ENCODE measurements at regions of chr6 and their contacts with region 1.

Region 1: GRCh38 chr6:19791267-19791666 is 45.9 kb upstream of the ID4 start:
- DNase-seq: no peak
- H3K4me3 ChIP-seq: no peak overlapping the region
- H3K27ac ChIP-seq: peak overlapping the region; percentile 64
- H3K4me1 ChIP-seq: peaks cover 0 to 28% of the 10 kb centered on the region in 2 donors
- H3K27me3 ChIP-seq: no peaks in the 10 kb centered on the region
- CTCF ChIP-seq: no peak

Region 2: DNA sequence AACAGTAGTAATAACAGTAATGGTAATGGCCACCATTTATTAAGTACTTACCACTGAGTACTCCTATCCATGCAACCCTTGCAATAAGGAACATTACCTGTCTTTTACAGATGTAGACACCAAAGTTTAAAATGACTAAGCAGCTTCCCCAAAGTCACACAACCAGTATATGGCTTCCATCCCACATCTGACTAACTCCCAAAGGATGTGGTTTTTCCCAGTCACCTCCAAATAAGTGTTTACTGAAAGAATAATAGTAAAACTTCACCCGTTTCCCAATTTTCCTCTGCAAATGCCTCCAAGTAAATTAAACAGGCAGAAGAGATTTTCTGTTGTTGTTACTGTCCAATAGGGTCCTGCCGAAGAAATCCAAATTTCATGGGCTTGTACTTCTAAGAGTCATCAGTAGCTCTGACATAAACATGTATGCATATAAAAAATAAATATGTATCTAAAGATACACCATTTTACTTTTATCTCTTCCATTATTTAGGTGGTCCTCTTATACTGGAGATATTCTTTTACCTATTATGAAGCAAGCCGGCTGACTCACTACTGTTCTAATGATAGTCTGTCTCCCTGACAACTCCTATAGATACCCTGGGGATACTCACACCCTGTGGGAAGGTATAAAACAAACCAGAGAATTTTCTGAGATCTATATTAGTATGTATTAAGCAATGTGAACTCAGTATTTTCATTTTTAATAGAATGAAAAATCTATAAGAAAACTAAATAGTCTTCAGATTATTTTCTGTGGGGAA is 32.0 kb before region 1 on chr6:
- intact Hi-C with region 1: loop called (anchors 5 kb)
- DNase-seq: no peak
- H3K4me3 ChIP-seq: no peak overlapping the region
- H3K27ac ChIP-seq: no peak overlapping the region
- H3K4me1 ChIP-seq: no peaks in the 10 kb centered on the region
- H3K27me3 ChIP-seq: no peaks in the 10 kb centered on the region
- CTCF ChIP-seq: no peak

Region 3: GRCh38 chr6:19918436-19918835 is 127.2 kb after region 1 on chr6:
- intact Hi-C with region 1: no loop called
- DNase-seq: no peak
- H3K4me3 ChIP-seq: no peak overlapping the region
- H3K27ac ChIP-seq: no peak overlapping the region
- H3K4me1 ChIP-seq: no peaks in the 10 kb centered on the region
- H3K27me3 ChIP-seq: no peaks in the 10 kb centered on the region
- CTCF ChIP-seq: no peak

Measured in ascending aorta (tissue), 2 donors.